Head of caudate nucleus (tissue), 42 donors: ENCODE measurements at regions of chr14 and their contacts with region 1.

Region 1: DNA sequence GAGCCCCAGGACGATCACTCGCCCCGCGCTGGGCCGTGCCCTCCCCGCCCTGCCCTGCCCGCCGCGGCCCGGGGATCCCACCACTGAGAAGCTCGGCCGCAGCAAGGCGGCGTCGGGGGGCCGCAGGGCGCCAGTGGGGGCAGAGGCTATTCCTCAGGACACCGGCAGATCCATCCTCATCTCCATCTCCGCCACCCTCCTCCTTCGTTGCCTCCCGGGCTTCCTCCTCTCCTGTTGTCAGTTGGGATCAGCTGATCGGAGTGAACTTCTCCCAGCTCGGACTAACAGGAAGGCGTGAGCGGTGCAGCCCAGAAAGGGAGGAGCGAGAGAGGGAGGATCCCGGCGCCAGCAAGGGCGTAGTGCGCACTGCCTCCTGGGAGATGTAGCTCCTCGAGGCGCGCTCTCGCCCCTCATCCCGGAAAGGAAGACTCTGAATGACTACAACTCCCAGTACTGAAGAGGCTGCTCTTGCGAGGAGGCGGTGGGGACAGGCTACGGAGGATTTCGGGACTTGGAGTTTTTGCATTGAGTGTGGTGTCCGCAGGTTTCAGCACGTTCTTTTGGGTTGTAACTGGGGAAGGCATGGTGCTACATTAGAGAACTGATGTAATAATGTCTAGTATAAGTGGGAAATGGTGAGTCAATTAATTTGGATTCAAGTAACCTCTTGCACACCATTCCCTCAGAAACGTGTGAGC is at the start of gene ZFYVE1:
- DNase-seq: peak; percentile 95 to 100 (median 99)

Region 2: DNA sequence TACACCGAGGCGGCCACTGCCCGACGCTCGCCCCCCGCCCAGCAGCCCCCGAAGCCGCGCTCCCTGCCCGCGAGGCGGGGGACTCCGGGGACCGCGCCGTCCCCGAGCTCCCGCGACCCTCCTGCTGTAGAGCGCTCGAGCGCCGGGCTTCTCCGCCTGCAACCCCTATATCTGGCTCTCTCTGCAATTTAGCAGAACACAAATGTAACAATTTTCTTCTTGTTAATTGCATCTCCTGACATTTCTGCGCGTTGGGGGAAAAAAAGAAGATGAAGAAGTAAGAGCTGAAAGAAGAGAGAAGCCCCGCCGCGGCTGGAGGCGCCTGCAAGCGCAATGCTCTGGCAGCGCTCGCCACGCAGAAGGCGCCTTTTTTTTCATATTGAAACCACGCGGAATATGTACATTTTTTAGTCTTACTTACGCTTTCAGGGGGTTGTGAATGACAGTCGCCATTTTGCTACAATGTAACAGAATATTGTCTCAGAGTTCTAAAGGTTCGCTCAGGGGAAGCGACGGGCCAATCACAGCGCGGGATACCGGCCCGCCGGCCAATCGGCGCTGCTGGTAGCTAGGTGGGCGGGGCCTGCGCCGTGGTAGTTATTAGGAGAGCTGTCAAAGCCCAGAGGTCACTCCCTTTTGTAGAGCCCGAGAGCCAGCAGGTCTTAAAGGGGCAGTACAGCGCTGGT is 133.2 kb before region 1 on chr14 and contains the start of gene DPF3:
- intact Hi-C with region 1: no loop called
- DNase-seq: peak; percentile 93 to 99 (median 97)

Region 3: DNA sequence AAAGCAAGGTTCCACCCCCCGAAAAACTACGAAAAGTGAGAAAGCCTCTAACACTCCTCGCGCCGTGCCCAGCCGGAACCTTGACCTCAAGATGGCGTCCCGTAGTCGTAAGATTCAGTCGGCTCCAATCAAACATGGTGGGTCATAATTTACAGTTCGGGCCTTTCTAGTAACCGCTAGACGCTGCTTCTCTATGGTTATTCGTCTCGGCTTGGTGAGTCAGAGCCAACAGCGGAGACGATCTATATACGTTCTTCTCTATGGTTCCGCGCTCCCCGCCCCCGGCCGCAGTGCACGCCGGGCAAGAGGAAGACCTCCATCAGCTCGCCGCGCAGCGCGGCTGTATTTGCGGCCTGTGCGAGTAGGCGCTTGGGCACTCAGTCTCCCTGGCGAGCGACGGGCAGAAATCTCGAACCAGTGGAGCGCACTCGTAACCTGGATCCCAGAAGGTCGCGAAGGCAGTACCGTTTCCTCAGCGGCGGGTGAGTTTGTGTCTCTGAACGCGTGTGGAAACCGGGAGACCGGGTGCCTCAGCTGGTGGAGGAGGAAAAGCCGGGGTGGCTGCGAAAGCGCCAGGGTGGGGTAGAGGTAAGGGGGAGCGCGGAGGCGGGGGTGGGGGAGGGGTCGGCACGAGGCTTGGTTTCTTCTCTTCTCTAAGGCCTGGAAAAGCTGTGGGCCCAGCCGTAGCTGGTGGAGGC is 31.4 kb after region 1 on chr14 and contains the start of gene RBM25:
- intact Hi-C with region 1: loop called (anchors 2 kb)
- DNase-seq: peak; percentile 91 to 99 (median 97)